A549 (cell line): ENCODE measurements at regions of chr22 and their contacts with region 1.

Region 1: DNA sequence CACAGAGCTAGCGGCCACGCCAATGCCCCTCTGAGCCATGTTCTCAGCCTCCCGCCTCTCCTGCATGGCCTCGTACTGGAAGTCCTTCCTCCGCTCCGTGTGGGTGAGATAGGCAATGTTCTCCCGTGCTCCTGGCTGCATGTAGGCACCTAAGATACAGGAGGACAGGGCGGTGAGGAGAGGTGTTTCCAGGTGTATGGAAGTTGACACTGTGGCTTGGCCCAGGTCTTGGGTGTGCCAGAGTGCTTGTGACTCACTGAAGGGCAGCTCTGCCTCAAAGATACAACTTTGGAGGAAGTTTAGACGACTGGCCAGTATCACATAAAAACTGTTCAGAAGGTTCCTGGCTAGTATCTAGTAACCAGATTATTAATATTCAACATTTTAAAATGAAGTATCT is 8.5 kb downstream of the SRRD start:
- DNase-seq: no peak
- ATAC-seq: no peak
- H3K4me3 ChIP-seq: no peak overlapping the region
- H3K27ac ChIP-seq: no peak overlapping the region
- H3K4me1 ChIP-seq: no peaks in the 10 kb centered on the region
- CTCF ChIP-seq: no peak
- EP300 ChIP-seq: no peak
- POLR2A ChIP-seq: no peak
- RAD21 ChIP-seq: no peak

Region 2: DNA sequence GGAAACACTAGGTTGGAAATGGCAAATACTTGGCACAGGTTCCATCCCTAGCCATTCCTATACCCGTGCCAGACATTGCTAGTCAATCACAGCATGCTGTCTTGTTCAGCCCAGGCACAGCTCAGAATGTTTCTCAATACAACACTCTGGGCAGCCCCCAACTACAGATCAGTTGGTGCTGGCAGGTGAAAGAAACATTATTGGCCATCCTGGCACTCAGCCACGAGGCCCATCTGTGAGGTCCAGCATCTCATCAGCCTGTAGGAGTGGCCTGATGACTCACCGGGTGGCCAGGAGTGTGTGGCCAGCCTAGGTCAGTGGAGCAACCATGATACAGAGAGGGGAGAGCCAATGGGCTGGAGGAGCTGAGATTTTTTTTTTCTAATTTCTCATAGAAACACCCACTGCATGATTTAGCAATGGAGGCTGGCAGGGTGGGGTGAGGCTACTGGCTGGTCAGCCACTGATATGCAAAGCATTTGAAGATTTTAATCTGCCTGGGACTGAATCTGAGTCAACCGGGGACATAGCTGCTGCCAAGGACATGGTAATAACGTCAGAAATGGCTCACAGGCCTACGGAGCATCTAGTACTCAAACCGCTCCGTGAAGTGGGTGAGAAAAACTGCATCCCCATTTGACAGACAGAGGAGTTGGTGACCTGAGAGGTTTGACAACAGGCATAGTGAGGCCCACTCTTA is 744.8 kb before region 1 on chr22:
- CTCF ChIA-PET with region 1: no interaction called
- POLR2A ChIA-PET with region 1: interaction called, 10 read pairs
- DNase-seq: peak; percentile 49 to 87
- ATAC-seq: peak; percentile 79 to 89
- H3K4me3 ChIP-seq: no peak overlapping the region
- H3K27ac ChIP-seq: peak overlapping the region; percentile 75 to 80
- H3K4me1 ChIP-seq: peaks cover 45% of the 10 kb centered on the region
- CTCF ChIP-seq: no peak
- EP300 ChIP-seq: no peak
- POLR2A ChIP-seq: no peak
- RAD21 ChIP-seq: no peak

Region 3: DNA sequence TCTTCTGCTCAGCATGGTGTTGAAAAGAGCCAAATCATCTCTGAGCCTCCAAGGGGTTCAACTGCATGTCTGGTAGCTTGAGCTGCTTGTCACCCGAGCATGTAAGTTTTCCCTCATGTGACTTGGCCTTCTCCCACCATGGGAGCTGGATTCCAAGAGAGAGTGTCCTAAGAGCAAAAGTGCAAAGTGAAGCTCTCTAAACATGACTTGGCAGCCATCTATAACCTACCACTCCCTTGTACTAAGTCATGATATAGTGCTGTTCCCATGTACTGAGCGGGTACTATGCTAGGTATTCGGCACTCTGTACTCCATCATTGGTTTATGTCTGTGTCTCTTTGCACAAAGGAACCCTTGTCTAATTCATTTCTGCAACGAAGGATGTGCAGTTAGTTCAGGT is 303.9 kb before region 1 on chr22:
- CTCF ChIA-PET with region 1: no interaction called
- POLR2A ChIA-PET with region 1: no interaction called
- DNase-seq: no peak
- ATAC-seq: no peak
- H3K4me3 ChIP-seq: no peak overlapping the region
- H3K27ac ChIP-seq: no peak overlapping the region
- H3K4me1 ChIP-seq: no peaks in the 10 kb centered on the region
- CTCF ChIP-seq: no peak
- EP300 ChIP-seq: no peak
- POLR2A ChIP-seq: no peak
- RAD21 ChIP-seq: no peak

Region 4: GRCh38 chr22:26610072-26610958 is 118.1 kb after region 1 on chr22:
- CTCF ChIA-PET with region 1: no interaction called
- POLR2A ChIA-PET with region 1: no interaction called
- DNase-seq: no peak
- ATAC-seq: peak; percentile 37 to 39; a peak in 3 of 6 replicates
- H3K4me3 ChIP-seq: no peak overlapping the region
- H3K27ac ChIP-seq: no peak overlapping the region
- H3K4me1 ChIP-seq: no peaks in the 10 kb centered on the region; the same call in 2 of the 3 replicates
- CTCF ChIP-seq: no peak
- EP300 ChIP-seq: no peak
- POLR2A ChIP-seq: no peak
- RAD21 ChIP-seq: no peak